Activated CD4-positive, alpha-beta T cell treated with anti-CD3 and anti-CD28 coated beads, Interleukin-2, amount 10 ng/mL, durations not matched to agents 24 days and 14 days (primary cell): ENCODE measurements at regions of chr16 and their contacts with region 1.

Region 1: DNA sequence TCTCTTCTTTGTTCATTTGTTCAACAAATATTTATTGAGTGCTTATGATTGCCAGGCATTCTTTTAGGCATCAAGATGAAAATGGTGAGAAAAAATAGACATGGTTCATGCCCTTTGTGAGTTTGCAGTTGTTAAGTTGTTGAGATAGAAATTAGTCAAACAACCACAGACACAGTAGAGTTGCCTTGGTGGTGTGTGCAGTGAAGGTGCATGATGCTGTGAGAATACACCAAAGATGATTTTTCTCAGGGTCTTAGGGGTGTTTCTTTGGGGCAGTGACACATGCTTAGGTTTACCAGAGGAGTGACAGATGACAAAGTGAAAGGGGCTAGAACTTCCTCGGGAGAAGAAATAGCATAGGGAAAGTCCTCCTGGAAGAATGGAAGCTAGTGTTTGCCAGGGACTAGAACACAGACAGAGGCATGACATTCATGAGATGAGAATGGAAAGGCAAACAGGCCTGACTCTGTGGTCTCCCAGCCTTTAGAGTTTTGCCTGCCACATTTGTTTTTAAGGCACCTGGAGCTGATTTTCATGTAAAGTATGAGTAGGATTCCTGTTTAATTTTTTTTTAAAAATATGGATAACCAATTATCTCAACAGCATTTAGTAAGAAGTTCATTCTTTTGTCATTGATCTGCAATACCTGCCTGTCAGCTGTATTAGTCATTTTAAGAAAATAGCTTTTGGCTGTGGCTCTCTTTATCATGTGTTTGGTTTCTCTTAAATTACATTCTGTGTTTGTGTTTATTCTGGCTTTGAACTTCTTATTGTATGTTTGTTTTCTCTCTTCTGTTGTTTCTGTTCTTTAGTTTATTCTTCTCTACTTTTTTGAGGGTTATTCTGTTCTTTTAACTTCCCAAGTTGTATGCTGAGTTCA is 36.6 kb downstream of the CYLD start:
- DNase-seq: no peak
- H3K4me3 Mint-ChIP-seq: peak overlapping the region; percentile 25
- H3K27ac Mint-ChIP-seq: peak overlapping the region; percentile 75
- H3K4me1 Mint-ChIP-seq: peaks cover 43% of the 10 kb centered on the region
- H3K27me3 Mint-ChIP-seq: no peaks in the 10 kb centered on the region

Region 2: GRCh38 chr16:50765260-50765659 is 13.3 kb before region 1 on chr16:
- intact Hi-C with region 1: loop called (anchors 1 kb)
- DNase-seq: no peak
- H3K4me3 Mint-ChIP-seq: peak overlapping the region; percentile 39
- H3K27ac Mint-ChIP-seq: peak overlapping the region; percentile 89
- H3K4me1 Mint-ChIP-seq: peaks cover 62% of the 10 kb centered on the region
- H3K27me3 Mint-ChIP-seq: no peaks in the 10 kb centered on the region

Region 3: DNA sequence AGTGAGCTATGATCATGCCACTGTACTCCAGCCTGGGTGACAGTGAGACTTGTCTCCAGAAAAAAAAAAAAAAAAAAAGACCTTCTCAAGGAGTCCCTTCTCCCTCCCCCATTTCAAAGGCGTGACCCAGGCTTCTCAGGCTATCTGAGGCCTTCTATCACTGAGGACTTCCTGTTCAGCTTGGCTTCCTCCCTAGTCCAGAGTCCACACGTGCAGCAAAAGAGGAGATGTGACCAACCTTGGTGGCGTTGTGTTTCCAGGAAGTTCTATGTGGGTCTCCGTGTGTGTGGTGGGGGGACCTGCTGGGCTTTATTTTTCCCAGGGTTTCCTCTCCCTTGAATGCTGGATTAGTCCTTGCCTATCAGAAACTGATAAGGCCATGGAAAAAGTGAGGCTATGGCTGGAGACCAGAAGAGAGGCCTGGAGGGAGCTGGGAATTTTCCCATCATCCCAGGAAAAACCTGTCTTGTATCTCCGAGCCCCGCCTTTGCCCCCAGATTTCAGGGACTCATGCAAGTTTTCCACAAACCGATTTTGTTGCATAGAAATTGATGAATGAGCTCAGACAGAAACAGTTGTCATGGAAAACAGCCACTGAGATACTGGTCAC is 224.5 kb after region 1 on chr16:
- intact Hi-C with region 1: no loop called
- DNase-seq: no peak
- H3K4me3 Mint-ChIP-seq: no peak overlapping the region
- H3K27ac Mint-ChIP-seq: no peak overlapping the region
- H3K4me1 Mint-ChIP-seq: no peaks in the 10 kb centered on the region
- H3K27me3 Mint-ChIP-seq: no peaks in the 10 kb centered on the region